Colonic mucosa (tissue), 4 donors: ENCODE measurements at regions of chr14 and their contacts with region 1.

Region 1: GRCh38 chr14:76956316-76957090 is 72.0 kb downstream of the IRF2BPL start:
- DNase-seq: peak; percentile 94
- H3K4me3 ChIP-seq: peak overlapping the region; percentile 45
- H3K27ac ChIP-seq: peak overlapping the region; percentile 88
- H3K4me1 ChIP-seq: peaks cover 4% of the 10 kb centered on the region
- H3K27me3 ChIP-seq: no peaks in the 10 kb centered on the region
- CTCF ChIP-seq: no peak

Region 2: GRCh38 chr14:76918751-76919543 is 37.6 kb before region 1 on chr14:
- intact Hi-C with region 1: loop called (anchors 5 kb)
- DNase-seq: peak; percentile 91
- H3K4me3 ChIP-seq: no peak overlapping the region
- H3K27ac ChIP-seq: peak overlapping the region; percentile 82
- H3K4me1 ChIP-seq: peaks cover 24% of the 10 kb centered on the region
- H3K27me3 ChIP-seq: no peaks in the 10 kb centered on the region
- CTCF ChIP-seq: no peak

Region 3: DNA sequence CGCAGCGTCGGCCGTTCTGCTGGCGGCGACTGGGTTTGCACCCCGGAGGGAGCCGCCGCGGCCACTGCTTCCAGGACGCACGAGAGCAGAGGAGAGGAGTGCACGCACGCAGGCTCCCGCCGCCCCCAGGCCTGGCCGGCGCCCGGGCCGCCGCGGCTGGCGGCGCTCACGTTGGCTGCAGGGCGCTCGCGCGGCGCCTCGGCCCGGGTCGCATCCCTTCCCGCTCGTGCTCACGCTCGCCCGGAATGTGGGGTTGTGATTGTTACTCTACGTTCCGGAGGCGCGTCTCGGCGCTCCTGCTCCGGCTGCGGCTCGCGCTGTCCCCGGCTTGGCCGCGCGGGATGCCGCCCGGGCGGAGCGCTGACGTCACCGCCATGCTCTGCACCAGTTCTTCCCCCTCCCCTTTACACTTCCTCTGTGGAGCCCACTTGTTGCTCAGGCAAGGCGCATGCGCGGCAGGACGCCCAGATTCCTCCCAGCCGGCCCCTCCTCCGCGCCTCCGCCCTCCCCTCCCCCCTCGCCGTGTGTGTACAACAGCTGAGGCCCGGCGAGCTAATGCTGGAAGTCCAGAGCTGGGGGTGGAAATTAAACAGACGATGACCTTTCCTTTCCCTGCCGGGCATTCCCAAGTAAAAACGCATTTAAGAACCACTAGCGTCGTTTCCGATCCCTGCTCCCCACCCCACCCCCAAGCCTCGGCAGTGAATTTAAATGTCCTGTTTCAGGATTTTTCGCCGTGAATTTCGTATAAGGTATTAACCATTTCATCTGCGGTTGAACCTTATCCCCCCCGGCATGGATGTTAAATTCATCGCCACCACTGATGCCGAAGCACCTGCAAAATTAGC is 72.1 kb after region 1 on chr14 and contains the start of gene IRF2BPL:
- intact Hi-C with region 1: loop called (anchors 5 kb)
- DNase-seq: peak; percentile 99
- H3K4me3 ChIP-seq: peak within 1 kb of the TSS; percentile 73
- H3K27ac ChIP-seq: peak within 1 kb of the TSS; percentile 100
- H3K4me1 ChIP-seq: peaks cover 13% of the 10 kb centered on the region
- H3K27me3 ChIP-seq: no peaks in the 10 kb centered on the region
- CTCF ChIP-seq: no peak
- total RNA-seq, gene IRF2BPL: 18.3 to 27.1 TPM